Common myeloid progenitor, CD34-positive (primary cell): ENCODE measurements at regions of chr14 and their contacts with region 1.

Region 1: DNA sequence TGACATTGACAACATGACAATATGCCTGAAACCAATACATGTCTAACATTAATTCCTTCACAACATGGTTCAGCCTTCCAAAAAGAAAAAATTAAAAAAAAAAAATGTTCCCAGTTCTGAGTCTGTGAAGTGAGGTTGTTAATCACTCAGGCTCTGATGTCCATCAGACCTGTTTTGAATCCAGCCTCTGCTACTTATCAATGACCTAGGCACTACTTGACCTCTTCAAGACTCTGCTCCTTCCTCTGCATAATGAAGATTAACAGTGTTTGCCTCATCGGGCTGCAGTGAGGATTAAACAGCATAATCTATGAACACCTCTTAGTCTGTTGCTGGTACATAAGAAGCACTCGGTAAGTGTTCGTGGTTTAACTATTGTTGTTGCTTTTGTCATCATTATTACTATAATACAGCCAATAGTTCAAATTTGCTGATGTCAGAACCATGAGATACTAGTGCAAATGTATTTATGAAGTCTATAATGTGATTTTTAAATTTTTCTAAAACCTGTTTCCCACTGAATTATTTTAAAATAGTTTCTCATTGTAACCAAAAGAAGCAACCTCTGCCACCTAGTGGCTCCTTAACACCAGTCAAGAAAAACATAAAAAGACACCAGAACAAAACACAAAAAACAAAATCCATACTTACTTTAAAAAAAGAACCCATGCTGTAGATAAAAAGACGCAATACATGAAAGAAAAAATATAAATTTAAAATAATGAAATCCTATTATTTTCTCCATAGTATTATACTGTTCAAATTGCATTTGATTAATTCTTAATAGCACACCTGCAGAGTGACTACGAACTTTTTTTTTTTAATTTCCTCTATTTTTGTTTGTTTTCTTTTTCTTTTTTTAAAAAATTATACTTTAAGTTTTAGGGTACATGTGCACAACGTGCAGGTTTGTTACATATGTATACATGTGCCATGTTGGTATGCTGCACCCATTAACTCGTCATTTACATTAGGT is 20.3 kb upstream of the TMX1 start:
- DNase-seq: peak; percentile 37 to 71 (median 63)
- H3K4me3 ChIP-seq: no peak overlapping the region
- H3K27ac ChIP-seq: no peak overlapping the region
- H3K4me1 ChIP-seq: no peaks in the 10 kb centered on the region
- H3K27me3 ChIP-seq: no peaks in the 10 kb centered on the region

Region 2: DNA sequence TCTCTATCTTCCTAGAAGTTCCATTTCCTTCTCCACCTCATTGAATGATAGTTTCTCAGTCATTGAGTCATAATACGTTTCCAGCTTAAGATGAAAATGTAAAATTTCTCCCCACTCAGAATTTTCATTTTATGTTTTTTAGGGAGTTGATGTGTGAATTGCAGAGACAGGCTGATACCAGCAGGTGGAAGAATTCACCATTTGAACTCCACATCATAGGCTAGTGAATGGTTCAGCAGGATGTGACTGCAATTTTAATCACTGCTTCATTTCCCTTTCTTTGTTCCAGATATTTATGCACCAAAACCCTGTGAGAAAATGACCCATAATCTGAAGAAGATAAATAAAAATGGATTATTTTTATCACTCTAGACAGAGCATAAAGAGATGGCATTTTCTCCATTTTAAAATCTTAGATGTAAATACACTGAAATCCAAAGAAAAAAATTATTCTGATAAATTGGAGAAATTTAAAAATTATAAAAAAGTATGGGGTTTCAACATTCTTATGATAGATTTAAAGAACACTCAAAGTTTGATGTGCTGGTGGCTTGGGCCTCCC is 264.9 kb before region 1 on chr14:
- CTCF ChIA-PET with region 1: interaction called, 20 read pairs
- POLR2A ChIA-PET with region 1: no interaction called
- DNase-seq: peak; percentile 49 to 71 (median 67)
- H3K4me3 ChIP-seq: no peak overlapping the region
- H3K27ac ChIP-seq: no peak overlapping the region
- H3K4me1 ChIP-seq: peaks cover 0 to 10% (median 4%) of the 10 kb centered on the region in 4 experiments
- H3K27me3 ChIP-seq: no peaks in the 10 kb centered on the region

Region 3: DNA sequence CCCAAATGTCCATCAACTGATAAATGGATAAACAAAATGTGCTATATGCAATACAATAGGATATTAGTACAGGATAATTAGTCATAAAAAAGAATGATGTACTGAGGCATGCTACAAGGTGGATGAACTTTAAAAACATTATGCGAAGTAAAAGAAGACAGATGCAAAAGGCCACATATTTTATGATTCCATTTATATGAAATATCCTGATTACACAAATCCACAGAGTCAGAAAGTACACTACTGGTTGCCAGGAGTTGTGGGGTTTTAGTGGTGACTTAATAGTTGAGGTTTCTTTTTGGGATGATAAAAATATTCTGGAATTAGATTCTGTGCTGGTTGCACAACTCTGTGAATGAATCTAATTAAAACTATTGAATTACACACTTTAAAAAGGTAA is 137.4 kb before region 1 on chr14:
- CTCF ChIA-PET with region 1: no interaction called
- POLR2A ChIA-PET with region 1: no interaction called
- DNase-seq: no peak
- H3K4me3 ChIP-seq: no peak overlapping the region
- H3K27ac ChIP-seq: no peak overlapping the region
- H3K4me1 ChIP-seq: no peaks in the 10 kb centered on the region
- H3K27me3 ChIP-seq: no peaks in the 10 kb centered on the region

Region 4: GRCh38 chr14:51157012-51157411 is 62.7 kb before region 1 on chr14:
- CTCF ChIA-PET with region 1: no interaction called
- POLR2A ChIA-PET with region 1: no interaction called
- DNase-seq: peak; percentile 15 to 36 (median 31)
- H3K4me3 ChIP-seq: no peak overlapping the region
- H3K27ac ChIP-seq: no peak overlapping the region
- H3K4me1 ChIP-seq: no peaks in the 10 kb centered on the region
- H3K27me3 ChIP-seq: no peaks in the 10 kb centered on the region

Region 5: DNA sequence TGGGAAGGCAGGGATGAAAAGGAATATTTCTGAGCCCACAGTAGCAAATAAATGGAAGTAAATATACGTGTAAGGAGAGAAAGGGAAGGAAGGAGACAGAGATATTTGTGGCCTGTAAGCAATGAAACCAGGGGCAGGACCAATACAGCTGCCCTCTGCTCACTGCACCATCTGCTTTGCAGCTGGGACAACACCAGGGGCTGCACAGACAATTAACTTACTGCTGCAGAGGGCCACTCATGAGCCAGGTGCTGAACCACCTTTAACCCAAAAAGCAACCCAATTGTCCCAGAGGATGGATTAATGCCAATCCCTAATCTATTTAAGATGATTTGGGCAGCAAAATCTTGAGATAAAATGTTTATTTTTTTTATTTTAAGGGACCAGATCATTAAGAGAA is 10.3 kb before region 1 on chr14:
- CTCF ChIA-PET with region 1: interaction called, 11 read pairs
- POLR2A ChIA-PET with region 1: no interaction called
- DNase-seq: no peak
- H3K4me3 ChIP-seq: no peak overlapping the region
- H3K27ac ChIP-seq: no peak overlapping the region
- H3K4me1 ChIP-seq: peaks cover 0 to 4% (median 0%) of the 10 kb centered on the region in 4 experiments
- H3K27me3 ChIP-seq: no peaks in the 10 kb centered on the region